ENCODE measurements at regions of chr12 and their contacts with region 1.

Region 1: DNA sequence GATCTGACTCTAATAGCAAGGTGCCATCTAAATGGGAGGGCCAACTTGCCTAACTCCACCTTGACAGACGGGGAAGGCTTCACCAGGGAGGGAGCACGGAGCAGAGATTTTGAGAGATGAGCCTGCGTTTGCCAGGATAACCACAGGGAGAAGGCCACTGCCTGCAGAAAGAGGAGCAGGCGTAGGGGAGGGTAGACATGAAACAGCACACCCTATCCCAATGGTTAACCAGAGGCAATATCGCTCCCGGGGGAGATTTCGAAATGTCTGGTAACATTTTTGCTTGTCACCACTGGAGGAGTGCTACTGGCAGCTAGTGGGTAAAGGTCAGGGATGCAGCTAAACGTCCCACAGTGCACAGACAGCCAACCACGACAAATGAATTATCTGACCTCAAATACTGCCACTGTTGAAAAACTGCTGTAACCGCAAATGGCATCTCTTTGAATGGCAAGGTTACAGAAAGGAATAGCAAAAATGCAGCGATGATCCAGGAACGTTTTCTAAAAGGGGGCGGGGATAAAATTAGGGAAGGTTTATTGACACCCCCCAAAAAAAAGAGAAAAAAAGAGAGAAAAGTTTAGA is 126.0 kb upstream of the ATF7IP start:
- DNase-seq: peak; percentile 64 to 85
- H3K4me3 ChIP-seq: no peak overlapping the region
- H3K4me3 Mint-ChIP-seq: peak overlapping the region; percentile 32
- H3K27ac Mint-ChIP-seq: peak overlapping the region; percentile 43
- H3K4me1 ChIP-seq: peaks cover 18% of the 10 kb centered on the region
- H3K4me1 Mint-ChIP-seq: peaks cover 9% of the 10 kb centered on the region
- H3K27me3 ChIP-seq: no peaks in the 10 kb centered on the region
- H3K27me3 Mint-ChIP-seq: no peaks in the 10 kb centered on the region
- CTCF ChIP-seq: peak in 1 of 2 experiments; percentile 16

Region 2: GRCh38 chr12:14618983-14619382 is 379.5 kb after region 1 on chr12:
- CTCF ChIA-PET with region 1: interaction called, 6 read pairs
- POLR2A ChIA-PET with region 1: no interaction called
- intact Hi-C with region 1: loop called (anchors 1 kb)
- DNase-seq: peak in 1 of 2 experiments; percentile 41
- H3K4me3 ChIP-seq: no peak overlapping the region
- H3K4me3 Mint-ChIP-seq: no peak overlapping the region
- H3K27ac Mint-ChIP-seq: no peak overlapping the region
- H3K4me1 ChIP-seq: peaks cover 23% of the 10 kb centered on the region
- H3K4me1 Mint-ChIP-seq: peaks cover 10% of the 10 kb centered on the region
- H3K27me3 ChIP-seq: no peaks in the 10 kb centered on the region
- H3K27me3 Mint-ChIP-seq: no peaks in the 10 kb centered on the region
- CTCF ChIP-seq: peak in 1 of 2 experiments; percentile 27

Region 3: DNA sequence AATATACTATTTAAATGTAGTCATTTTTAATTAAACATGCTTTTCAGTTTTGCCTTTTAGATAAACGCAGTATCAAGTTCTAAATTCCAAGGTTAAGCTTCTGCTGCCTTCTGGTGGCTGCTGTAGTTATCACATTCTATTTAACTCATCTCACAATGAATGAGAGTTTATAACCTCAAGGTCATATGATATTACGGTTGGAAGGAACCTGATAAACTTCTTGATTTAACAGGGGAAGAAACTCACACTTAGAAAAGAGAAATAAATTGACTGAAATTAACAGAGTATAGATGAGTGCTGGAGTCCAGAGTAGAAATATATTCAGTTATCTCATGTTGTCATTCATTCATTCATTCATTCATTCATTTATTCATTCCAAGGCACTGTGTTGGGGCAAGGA is 425.1 kb after region 1 on chr12:
- CTCF ChIA-PET with region 1: no interaction called
- POLR2A ChIA-PET with region 1: no interaction called
- intact Hi-C with region 1: loop called (anchors 1 kb)
- DNase-seq: peak in 1 of 2 experiments; percentile 51
- H3K4me3 ChIP-seq: no peak overlapping the region
- H3K4me3 Mint-ChIP-seq: no peak overlapping the region
- H3K27ac Mint-ChIP-seq: no peak overlapping the region
- H3K4me1 ChIP-seq: no peaks in the 10 kb centered on the region
- H3K4me1 Mint-ChIP-seq: peaks cover 10% of the 10 kb centered on the region
- H3K27me3 ChIP-seq: no peaks in the 10 kb centered on the region
- H3K27me3 Mint-ChIP-seq: no peaks in the 10 kb centered on the region
- CTCF ChIP-seq: peak; percentile 64 to 89

Region 4: GRCh38 chr12:14836302-14837210 is 597.1 kb after region 1 on chr12:
- CTCF ChIA-PET with region 1: no interaction called
- POLR2A ChIA-PET with region 1: no interaction called
- intact Hi-C with region 1: no loop called
- DNase-seq: peak in 1 of 2 experiments; percentile 33
- H3K4me3 ChIP-seq: no peak overlapping the region
- H3K4me3 Mint-ChIP-seq: peak overlapping the region; percentile 37
- H3K27ac Mint-ChIP-seq: peak overlapping the region; percentile 75
- H3K4me1 ChIP-seq: peaks cover 30% of the 10 kb centered on the region
- H3K4me1 Mint-ChIP-seq: peaks cover 12% of the 10 kb centered on the region
- H3K27me3 ChIP-seq: no peaks in the 10 kb centered on the region
- H3K27me3 Mint-ChIP-seq: peaks cover 5% of the 10 kb centered on the region
- CTCF ChIP-seq: no peak